ENCODE measurements at regions of chr1 and their contacts with region 1.

Region 1: GRCh38 chr1:181479137-181479745 is 4.1 kb upstream of the CACNA1E start:
- DNase-seq: peak; percentile 52 to 58
- H3K4me3 ChIP-seq: no peak overlapping the region
- H3K27ac ChIP-seq: no peak overlapping the region
- H3K4me1 ChIP-seq: peaks cover 6 to 8% of the 10 kb centered on the region in 2 donors
- H3K27me3 ChIP-seq: peaks cover 17% of the 10 kb centered on the region
- CTCF ChIP-seq: peak; percentile 17 to 92 (median 77)
- POLR2A ChIP-seq: no peak

Region 2: GRCh38 chr1:181318022-181318857 is 161.0 kb before region 1 on chr1:
- intact Hi-C with region 1: no loop called
- DNase-seq: peak in 1 of 2 donors; percentile 3
- H3K4me3 ChIP-seq: no peak overlapping the region
- H3K27ac ChIP-seq: no peak overlapping the region
- H3K4me1 ChIP-seq: peaks cover 5 to 14% of the 10 kb centered on the region in 2 donors
- H3K27me3 ChIP-seq: peaks cover 7% of the 10 kb centered on the region
- CTCF ChIP-seq: no peak
- POLR2A ChIP-seq: no peak

Region 3: DNA sequence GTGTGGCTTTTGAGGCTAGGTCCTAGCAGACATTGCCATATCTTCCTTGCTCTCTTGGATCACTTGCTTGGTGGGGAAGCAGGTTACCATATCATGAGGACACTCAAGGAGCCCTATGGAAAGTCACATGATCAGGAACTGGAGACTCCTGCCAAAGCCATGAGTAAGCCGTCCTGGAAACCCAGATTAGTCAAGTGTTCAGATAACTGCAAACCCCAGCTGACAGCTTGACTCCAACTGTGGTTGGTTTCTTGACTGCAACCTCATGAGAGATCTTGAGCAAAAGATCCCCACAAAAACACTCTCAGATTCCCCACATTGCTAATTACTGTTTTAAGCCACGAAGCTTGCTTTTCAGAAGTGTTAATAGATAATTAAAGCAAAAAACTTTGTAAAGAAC is 62.7 kb after region 1 on chr1:
- intact Hi-C with region 1: no loop called
- DNase-seq: peak; percentile 14 to 16
- H3K4me3 ChIP-seq: no peak overlapping the region
- H3K27ac ChIP-seq: no peak overlapping the region
- H3K4me1 ChIP-seq: no peaks in the 10 kb centered on the region
- H3K27me3 ChIP-seq: no peaks in the 10 kb centered on the region
- CTCF ChIP-seq: no peak
- POLR2A ChIP-seq: no peak

Region 4: GRCh38 chr1:181676269-181676668 is 197.0 kb after region 1 on chr1:
- intact Hi-C with region 1: loop called (anchors 10 kb)
- DNase-seq: peak; percentile 33 to 36
- H3K4me3 ChIP-seq: no peak overlapping the region
- H3K27ac ChIP-seq: no peak overlapping the region
- H3K4me1 ChIP-seq: no peaks in the 10 kb centered on the region
- H3K27me3 ChIP-seq: no peaks in the 10 kb centered on the region
- CTCF ChIP-seq: peak in 3 of 6 experiments; percentile 41 to 50 (median 50)
- POLR2A ChIP-seq: no peak

Region 5: DNA sequence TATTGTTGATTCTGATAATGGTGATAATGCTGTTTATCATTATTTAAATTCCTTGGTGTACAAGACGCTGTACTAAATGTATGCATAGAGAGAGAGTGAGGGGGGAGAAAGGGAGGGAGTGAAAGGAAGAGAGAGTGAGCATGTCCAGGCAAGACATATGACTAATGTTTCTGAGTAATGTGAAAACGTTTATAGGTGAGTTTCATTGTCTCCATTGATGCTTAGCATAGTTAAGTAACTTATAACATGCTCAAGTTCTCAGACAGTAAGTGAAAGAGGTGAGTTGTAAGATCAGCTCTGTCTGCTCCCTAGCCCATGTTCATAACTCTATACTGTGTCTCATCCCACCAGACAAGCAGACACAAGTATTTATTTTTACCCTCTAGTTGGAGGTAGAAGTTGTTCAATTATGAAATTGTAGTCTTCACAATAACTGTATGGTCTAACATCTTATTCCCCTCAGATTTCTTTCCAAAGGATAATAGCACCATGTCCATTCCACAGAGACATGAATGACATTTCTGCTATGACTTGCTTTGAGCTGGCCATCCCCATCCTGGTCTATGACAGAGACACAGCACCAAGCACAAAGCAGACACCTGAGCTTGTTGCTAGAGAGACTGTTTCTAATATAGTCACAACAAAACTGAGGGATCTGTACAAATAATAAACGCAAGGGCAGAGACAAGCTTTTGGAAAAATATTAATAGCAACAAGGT is 289.1 kb after region 1 on chr1:
- intact Hi-C with region 1: no loop called
- DNase-seq: no peak
- H3K4me3 ChIP-seq: no peak overlapping the region
- H3K27ac ChIP-seq: no peak overlapping the region
- H3K4me1 ChIP-seq: no peaks in the 10 kb centered on the region
- H3K27me3 ChIP-seq: no peaks in the 10 kb centered on the region
- CTCF ChIP-seq: no peak
- POLR2A ChIP-seq: no peak

Region 6: DNA sequence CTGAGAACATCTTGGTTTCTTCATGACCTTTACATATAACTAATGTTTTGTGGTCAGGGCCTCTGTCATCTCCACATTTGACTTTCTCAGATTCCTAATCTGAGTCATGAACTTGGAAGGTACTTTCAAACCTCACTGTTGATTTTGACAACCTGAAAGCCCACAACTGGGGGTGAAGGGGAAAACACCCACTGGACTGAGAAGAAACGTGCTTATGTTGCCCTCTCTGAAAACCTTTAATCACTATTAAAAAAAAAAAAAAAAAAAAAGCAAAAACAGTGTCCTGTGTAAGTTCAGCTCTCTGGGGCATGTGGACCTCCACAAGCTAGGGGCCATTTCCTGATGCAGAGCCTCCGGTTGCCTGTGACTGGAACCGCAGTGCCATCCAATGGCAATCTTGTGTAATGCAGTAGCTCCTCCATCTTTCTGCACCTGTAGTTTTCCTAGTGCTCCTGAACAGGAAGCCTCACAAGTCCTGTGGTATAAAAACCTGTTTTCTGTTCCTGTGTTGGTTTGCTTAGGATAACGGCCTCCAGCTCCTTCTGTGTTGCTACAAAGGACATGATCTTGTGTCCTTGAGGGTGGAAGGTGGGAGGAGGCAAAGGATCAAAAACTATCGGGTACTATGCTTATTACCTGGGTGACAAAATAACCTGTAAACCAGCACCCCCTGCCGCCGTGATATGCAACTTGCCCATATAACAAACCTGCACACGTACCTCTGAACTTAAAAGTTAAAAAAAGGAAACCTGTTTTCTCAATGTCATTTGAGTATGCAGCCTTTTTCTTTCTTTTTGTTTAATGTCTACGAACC is 457.7 kb after region 1 on chr1:
- intact Hi-C with region 1: loop called (anchors 5 kb)
- DNase-seq: peak; percentile 71 to 79
- H3K4me3 ChIP-seq: no peak overlapping the region
- H3K27ac ChIP-seq: no peak overlapping the region
- H3K4me1 ChIP-seq: no peaks in the 10 kb centered on the region
- H3K27me3 ChIP-seq: no peaks in the 10 kb centered on the region
- CTCF ChIP-seq: peak; percentile 35 to 98 (median 70)
- POLR2A ChIP-seq: no peak

Region 7: DNA sequence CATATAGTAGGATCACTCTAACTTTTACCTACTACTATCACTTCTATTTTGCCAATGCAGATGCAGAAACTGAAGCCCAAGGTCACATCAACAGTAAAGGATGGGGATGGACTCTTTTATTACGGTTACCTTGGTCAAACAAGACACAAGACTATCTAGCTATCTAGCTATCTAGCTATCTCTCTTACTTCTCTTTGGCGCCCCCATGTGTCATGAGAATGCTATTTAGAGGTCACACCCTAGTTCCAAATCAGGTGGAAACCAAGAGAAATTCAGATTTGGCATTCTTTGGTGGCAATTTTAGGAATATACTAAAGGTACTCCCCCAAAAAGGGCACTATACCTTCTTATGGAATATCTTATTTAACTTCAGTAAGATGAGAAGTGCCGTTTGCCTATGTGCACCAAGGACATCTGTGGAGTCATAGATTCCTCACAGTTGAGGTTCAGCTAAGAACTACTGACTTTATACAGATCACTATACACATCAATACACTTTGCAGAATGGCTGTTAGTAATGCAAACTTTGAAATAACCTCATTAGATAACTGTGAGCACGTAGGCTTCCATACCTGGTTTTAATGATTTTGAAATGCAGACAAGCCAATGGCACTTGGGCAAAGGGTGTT is 575.6 kb after region 1 on chr1:
- intact Hi-C with region 1: loop called (anchors 5 kb)
- DNase-seq: peak; percentile 53 to 67
- H3K4me3 ChIP-seq: no peak overlapping the region
- H3K27ac ChIP-seq: no peak overlapping the region
- H3K4me1 ChIP-seq: no peaks in the 10 kb centered on the region
- H3K27me3 ChIP-seq: no peaks in the 10 kb centered on the region
- CTCF ChIP-seq: peak in 5 of 6 experiments; percentile 35 to 65 (median 54)
- POLR2A ChIP-seq: no peak

Region 8: GRCh38 chr1:182426442-182427430 is 947.5 kb after region 1 on chr1:
- intact Hi-C with region 1: loop called (anchors 10 kb)
- DNase-seq: no peak
- H3K4me3 ChIP-seq: no peak overlapping the region
- H3K27ac ChIP-seq: no peak overlapping the region
- H3K4me1 ChIP-seq: no peaks in the 10 kb centered on the region
- H3K27me3 ChIP-seq: no peaks in the 10 kb centered on the region
- CTCF ChIP-seq: no peak
- POLR2A ChIP-seq: no peak

Measured in thyroid gland (tissue), 4 donors.